ENCODE measurements at regions of chr7 and their contacts with region 1.

Region 1: DNA sequence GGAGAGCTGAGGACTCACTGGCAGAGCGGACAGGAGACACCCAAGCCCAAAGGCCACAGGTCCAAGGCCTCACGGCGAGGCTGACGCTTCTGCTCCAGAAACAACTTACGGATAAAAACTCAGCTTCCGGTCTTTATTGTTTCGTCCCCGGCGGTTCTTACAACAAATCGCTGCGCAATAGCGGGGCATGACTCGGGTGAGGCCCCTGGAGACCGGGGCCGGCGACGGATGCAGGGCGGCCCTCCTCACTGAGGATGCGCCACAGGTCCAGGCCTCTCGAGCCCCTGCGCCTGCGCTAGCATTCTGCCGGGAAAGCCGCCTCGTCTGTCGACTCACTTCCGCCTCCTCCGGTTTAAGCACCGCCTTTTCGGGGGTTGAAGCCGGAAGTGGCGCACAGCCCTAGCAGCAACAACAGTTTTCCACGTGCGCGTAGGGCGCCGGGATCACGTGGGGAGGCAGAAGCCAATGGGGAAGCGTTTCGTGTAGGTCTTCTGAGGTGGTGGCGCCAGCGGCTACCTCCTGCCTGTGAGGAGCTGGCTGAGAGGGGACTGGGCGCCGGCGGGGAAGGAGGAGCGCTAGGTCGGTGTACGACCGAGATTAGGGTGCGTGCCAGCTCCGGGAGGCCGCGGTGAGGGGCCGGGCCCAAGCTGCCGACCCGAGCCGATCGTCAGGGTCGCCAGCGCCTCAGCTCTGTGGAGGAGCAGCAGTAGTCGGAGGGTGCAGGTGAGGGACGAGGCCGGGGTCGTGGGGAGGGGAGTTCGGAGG is at the starts of genes DNAJB9 and THAP5:
- DNase-seq: peak; percentile 100

Region 2: GRCh38 chr7:108525985-108526767 is 43.4 kb before region 1 on chr7 and contains the start of gene PNPLA8:
- intact Hi-C with region 1: loop called (anchors 1 kb)
- DNase-seq: peak; percentile 100

Measured in posterior cingulate gyrus (tissue), 11 donors.